A673 (cell line): ENCODE measurements at regions of chr9 and their contacts with region 1.

Region 1: GRCh38 chr9:86645303-86645702 is 291.1 kb upstream of the TUT7 start:
- DNase-seq: no peak
- H3K4me3 ChIP-seq: no peak overlapping the region
- H3K27ac ChIP-seq: peak overlapping the region; percentile 97
- H3K4me1 ChIP-seq: peaks cover 87% of the 10 kb centered on the region
- H3K27me3 ChIP-seq: no peaks in the 10 kb centered on the region
- CTCF ChIP-seq: no peak

Region 2: DNA sequence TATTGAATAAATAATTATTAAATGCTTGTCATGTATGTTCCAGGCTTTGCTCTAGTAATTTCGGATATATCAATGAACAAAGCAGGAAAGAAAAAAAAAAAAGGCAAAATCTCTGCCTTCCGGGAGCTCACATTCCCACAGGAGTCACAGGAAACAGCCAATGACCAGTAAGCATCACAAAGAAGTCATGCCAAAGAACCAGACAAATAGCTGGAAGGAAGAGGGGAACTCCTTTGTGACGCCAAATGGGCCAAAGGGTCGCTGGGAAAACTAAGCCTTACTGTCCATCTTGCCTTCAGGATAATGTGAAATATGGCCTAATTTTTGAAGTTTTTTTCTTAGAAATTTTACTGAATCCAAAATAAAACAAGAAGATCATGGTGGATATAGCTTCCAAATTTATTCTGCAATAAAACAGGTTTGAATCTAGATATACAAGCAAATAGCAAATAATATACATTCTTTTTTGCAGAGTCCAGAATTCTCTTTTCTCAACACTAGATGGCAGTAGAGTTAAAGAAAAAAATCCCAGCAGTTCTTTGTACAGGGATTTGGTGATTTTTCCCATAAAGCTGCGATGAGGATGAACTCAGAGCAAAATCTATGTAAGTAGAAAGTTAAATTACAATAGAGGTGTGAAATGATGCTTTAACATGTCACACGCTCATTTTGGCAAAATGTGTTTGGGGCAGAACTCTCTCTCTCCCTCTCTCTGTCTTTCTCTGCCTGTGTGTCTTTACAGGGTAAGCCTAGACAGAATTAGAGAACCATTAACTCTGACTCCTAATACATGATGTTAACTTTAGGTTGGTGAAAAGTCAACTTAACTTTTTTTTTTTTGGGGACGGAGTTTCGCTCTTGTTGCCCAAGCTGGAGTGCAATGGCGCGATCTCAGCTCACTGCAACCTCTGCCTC is 231.1 kb before region 1 on chr9:
- CTCF ChIA-PET with region 1: no interaction called
- POLR2A ChIA-PET with region 1: no interaction called
- intact Hi-C with region 1: loop called (anchors 5 kb)
- DNase-seq: peak; percentile 74
- H3K4me3 ChIP-seq: no peak overlapping the region
- H3K27ac ChIP-seq: no peak overlapping the region
- H3K4me1 ChIP-seq: no peaks in the 10 kb centered on the region
- H3K27me3 ChIP-seq: no peaks in the 10 kb centered on the region
- CTCF ChIP-seq: peak; percentile 81

Region 3: DNA sequence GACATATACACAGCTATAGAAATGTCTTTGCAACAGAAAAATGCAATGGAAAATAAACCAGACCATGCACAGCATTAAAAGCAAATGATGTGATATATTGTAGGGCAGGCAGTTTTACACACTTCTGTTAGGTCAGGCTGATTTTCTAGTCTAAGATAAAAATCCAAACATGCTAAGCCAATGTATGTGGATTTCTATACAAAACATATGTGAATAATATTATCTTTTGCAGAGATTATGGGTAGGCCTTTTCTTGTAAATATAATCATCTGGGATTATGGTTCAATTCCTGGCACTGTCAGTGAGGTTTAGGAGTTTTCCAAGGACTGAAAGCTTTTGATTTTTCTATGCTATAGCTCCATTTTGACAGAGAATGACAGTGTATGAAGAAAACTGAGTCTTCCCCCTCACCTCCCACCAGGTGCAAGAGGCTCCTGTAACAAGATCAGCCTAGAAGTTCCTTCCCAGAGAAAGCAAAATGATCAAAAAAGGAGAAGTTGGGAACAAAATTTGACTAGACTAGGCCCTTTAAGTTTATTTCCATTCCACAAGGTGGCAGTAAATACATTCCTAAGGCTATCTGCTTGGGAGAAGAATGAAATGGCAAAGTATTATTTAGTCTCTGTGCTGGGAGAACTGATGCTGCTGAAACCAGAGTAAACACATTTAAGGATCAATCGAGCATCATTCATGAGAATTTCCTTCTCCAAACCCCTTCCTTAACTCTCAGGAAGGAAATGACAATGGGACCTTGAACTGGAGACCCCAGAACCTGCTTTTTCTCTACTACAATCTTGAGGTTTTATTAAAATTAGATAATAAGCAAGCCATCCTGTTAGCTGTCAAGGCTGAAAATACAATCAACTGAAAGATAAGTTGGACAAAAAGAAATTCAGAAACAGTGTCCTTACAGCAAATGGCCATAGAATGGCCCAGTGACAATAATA is 158.1 kb before region 1 on chr9:
- CTCF ChIA-PET with region 1: interaction called, 3 read pairs
- POLR2A ChIA-PET with region 1: no interaction called
- intact Hi-C with region 1: loop called (anchors 2 kb)
- DNase-seq: peak; percentile 90
- H3K4me3 ChIP-seq: no peak overlapping the region
- H3K27ac ChIP-seq: peak overlapping the region; percentile 72
- H3K4me1 ChIP-seq: peaks cover 38% of the 10 kb centered on the region
- H3K27me3 ChIP-seq: no peaks in the 10 kb centered on the region
- CTCF ChIP-seq: peak; percentile 74

Region 4: GRCh38 chr9:86580688-86581087 is 64.6 kb before region 1 on chr9:
- CTCF ChIA-PET with region 1: no interaction called
- POLR2A ChIA-PET with region 1: no interaction called
- intact Hi-C with region 1: no loop called
- DNase-seq: no peak
- H3K4me3 ChIP-seq: no peak overlapping the region
- H3K27ac ChIP-seq: peak overlapping the region; percentile 21
- H3K4me1 ChIP-seq: peaks cover 52% of the 10 kb centered on the region
- H3K27me3 ChIP-seq: no peaks in the 10 kb centered on the region
- CTCF ChIP-seq: no peak

Region 5: GRCh38 chr9:86948074-86948929 is 303.0 kb after region 1 on chr9:
- CTCF ChIA-PET with region 1: interaction called, 5 read pairs
- POLR2A ChIA-PET with region 1: no interaction called
- intact Hi-C with region 1: loop called (anchors 2 kb)
- DNase-seq: peak; percentile 94
- H3K4me3 ChIP-seq: peak overlapping the region; percentile 84
- H3K27ac ChIP-seq: peak overlapping the region; percentile 71
- H3K4me1 ChIP-seq: peaks cover 22% of the 10 kb centered on the region
- H3K27me3 ChIP-seq: no peaks in the 10 kb centered on the region
- CTCF ChIP-seq: peak; percentile 84

Region 6: GRCh38 chr9:87465832-87466231 is 820.5 kb after region 1 on chr9:
- CTCF ChIA-PET with region 1: no interaction called
- POLR2A ChIA-PET with region 1: interaction called, 15 read pairs
- intact Hi-C with region 1: no loop called
- DNase-seq: no peak
- H3K4me3 ChIP-seq: no peak overlapping the region
- H3K27ac ChIP-seq: no peak overlapping the region
- H3K4me1 ChIP-seq: peaks cover 32% of the 10 kb centered on the region
- H3K27me3 ChIP-seq: no peaks in the 10 kb centered on the region
- CTCF ChIP-seq: no peak